WTC11 (cell line): ENCODE measurements at regions of chr4 and their contacts with region 1.

Region 1: GRCh38 chr4:55948726-55949474 is at the start of gene CEP135:
- DNase-seq: peak; percentile 94
- ATAC-seq: peak; percentile 81
- H3K4me3 Mint-ChIP-seq: peak within 1 kb of the TSS; percentile 85
- H3K27ac Mint-ChIP-seq: peak within 1 kb of the TSS; percentile 93
- H3K4me1 Mint-ChIP-seq: peaks cover 37% of the 10 kb centered on the region
- H3K27me3 Mint-ChIP-seq: no peaks in the 10 kb centered on the region
- CTCF ChIP-seq: peak; percentile 91
- total RNA-seq, gene CEP135: 11.3 to 13.6 TPM (median 12.9 TPM) in 3 replicates

Region 2: GRCh38 chr4:55959655-55960054 is 10.8 kb after region 1 on chr4:
- CTCF ChIA-PET with region 1: interaction called, 14 read pairs
- POLR2A ChIA-PET with region 1: no interaction called
- DNase-seq: no peak
- ATAC-seq: no peak
- H3K4me3 Mint-ChIP-seq: no peak overlapping the region
- H3K27ac Mint-ChIP-seq: no peak overlapping the region
- H3K4me1 Mint-ChIP-seq: no peaks in the 10 kb centered on the region
- H3K27me3 Mint-ChIP-seq: no peaks in the 10 kb centered on the region
- CTCF ChIP-seq: no peak

Region 3: GRCh38 chr4:55965585-55965984 is 16.7 kb after region 1 on chr4:
- CTCF ChIA-PET with region 1: interaction called, 10 read pairs
- POLR2A ChIA-PET with region 1: no interaction called
- DNase-seq: no peak
- ATAC-seq: no peak
- H3K4me3 Mint-ChIP-seq: no peak overlapping the region
- H3K27ac Mint-ChIP-seq: no peak overlapping the region
- H3K4me1 Mint-ChIP-seq: no peaks in the 10 kb centered on the region
- H3K27me3 Mint-ChIP-seq: no peaks in the 10 kb centered on the region
- CTCF ChIP-seq: no peak

Region 4: DNA sequence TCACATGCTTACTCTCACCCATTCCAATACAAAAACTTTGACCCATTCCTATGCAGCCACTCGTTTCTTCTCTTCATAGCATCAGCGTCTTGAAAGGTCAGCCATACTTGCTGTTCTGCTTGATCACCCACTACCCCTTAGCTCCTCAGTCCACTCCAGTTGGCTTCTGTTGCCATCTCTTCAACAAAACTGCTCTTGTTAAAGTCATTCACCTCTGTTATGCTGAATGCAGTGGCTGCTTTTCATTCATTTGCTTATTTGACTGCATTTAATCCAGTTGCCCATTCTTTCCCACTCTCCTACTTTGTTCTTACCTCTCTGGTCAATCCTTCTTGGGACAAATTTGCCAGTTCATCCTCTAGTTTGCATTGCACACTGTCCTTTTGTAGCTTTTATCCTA is 24.8 kb after region 1 on chr4:
- CTCF ChIA-PET with region 1: interaction called, 25 read pairs
- POLR2A ChIA-PET with region 1: no interaction called
- DNase-seq: no peak
- ATAC-seq: peak; percentile 95
- H3K4me3 Mint-ChIP-seq: no peak overlapping the region
- H3K27ac Mint-ChIP-seq: peak overlapping the region; percentile 83
- H3K4me1 Mint-ChIP-seq: peaks cover 15% of the 10 kb centered on the region
- H3K27me3 Mint-ChIP-seq: no peaks in the 10 kb centered on the region
- CTCF ChIP-seq: no peak

Region 5: DNA sequence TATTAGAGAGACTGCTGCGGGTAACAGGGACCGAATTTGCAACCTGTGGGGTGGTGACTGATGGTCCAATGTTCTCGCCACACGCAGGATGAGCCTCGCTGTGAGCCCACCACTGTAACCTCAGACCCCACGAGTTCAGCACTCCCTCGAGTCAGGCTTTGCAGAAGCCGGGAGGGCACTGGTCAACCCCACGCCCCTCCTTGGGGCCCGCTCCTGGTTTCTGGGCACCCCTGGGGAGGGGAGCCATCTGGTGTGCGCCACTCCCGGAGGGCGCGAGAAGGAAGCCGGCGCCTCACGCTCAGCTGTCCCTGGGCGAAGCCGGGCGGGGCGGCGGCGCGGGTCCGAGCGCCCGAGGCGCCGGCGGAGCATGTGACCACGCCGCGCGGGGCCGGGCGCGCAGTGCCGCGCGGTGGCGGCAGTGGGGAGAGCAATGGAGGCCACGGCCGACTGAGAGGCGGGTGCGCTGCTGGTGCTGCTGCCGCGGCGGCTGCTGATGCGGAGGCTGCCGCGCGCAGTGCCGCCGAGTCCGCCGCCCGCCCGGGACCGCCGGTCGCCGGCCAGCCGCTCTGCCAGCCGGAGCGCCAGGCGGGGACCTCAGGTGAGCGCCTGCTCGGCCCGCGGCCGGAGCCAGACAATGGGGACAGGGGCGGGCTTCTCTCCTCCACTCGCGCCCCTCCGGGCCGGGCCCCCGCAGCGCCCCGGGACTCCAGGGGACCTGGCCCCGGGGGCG is 100.0 kb after region 1 on chr4:
- CTCF ChIA-PET with region 1: interaction called, 10 read pairs
- POLR2A ChIA-PET with region 1: interaction called, 3 read pairs
- DNase-seq: peak; percentile 70
- ATAC-seq: peak; percentile 72
- H3K4me3 Mint-ChIP-seq: peak overlapping the region; percentile 81
- H3K27ac Mint-ChIP-seq: peak overlapping the region; percentile 79; the same call in 1 of the 2 replicates
- H3K4me1 Mint-ChIP-seq: peaks cover 29% of the 10 kb centered on the region
- H3K27me3 Mint-ChIP-seq: peaks cover 3% of the 10 kb centered on the region; the same call in 1 of the 2 replicates
- CTCF ChIP-seq: no peak

Region 6: DNA sequence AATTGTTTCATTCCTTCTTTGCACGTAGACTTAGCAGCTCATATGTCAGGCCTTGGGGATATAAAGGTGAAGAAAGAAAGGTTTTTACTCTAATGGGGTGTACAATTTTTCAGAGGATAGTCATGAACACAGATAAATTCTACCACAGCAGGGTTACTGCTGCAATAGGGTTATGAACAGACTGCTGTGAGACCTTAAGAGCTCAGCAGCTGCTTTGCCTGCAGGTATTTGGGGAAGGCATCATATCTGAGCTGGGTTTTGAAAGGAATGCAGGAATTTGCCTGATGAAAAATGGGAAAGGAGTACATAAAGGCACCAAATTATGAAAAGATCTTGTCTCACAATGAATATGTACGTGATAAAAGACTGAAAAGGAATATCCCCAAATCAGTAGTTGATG is 128.8 kb after region 1 on chr4:
- CTCF ChIA-PET with region 1: no interaction called
- POLR2A ChIA-PET with region 1: no interaction called
- DNase-seq: no peak
- ATAC-seq: no peak
- H3K4me3 Mint-ChIP-seq: no peak overlapping the region
- H3K27ac Mint-ChIP-seq: no peak overlapping the region
- H3K4me1 Mint-ChIP-seq: peaks cover 25% of the 10 kb centered on the region
- H3K27me3 Mint-ChIP-seq: no peaks in the 10 kb centered on the region
- CTCF ChIP-seq: no peak

Region 7: GRCh38 chr4:56301181-56302076 is 352.5 kb after region 1 on chr4:
- CTCF ChIA-PET with region 1: interaction called, 14 read pairs
- POLR2A ChIA-PET with region 1: interaction called, 4 read pairs
- DNase-seq: peak; percentile 72
- ATAC-seq: peak; percentile 94
- H3K4me3 Mint-ChIP-seq: no peak overlapping the region
- H3K27ac Mint-ChIP-seq: no peak overlapping the region
- H3K4me1 Mint-ChIP-seq: peaks cover 18% of the 10 kb centered on the region
- H3K27me3 Mint-ChIP-seq: no peaks in the 10 kb centered on the region
- CTCF ChIP-seq: peak; percentile 52